CD8-positive, alpha-beta T cell (primary cell): ENCODE measurements at regions of chr16 and their contacts with region 1.

Region 1: GRCh38 chr16:28924732-28925385 is at the start of gene RABEP2:
- DNase-seq: peak; percentile 92 to 99 (median 94)
- ATAC-seq: peak; percentile 77
- H3K4me3 ChIP-seq: peak within 1 kb of the TSS; percentile 96 to 97
- H3K4me3 Mint-ChIP-seq: peak within 1 kb of the TSS; percentile 94
- H3K27ac ChIP-seq: peak within 1 kb of the TSS; percentile 98
- H3K27ac Mint-ChIP-seq: peak within 1 kb of the TSS; percentile 97
- H3K4me1 ChIP-seq: peaks cover 10% of the 10 kb centered on the region
- H3K4me1 Mint-ChIP-seq: peaks cover 25% of the 10 kb centered on the region
- H3K27me3 ChIP-seq: no peaks in the 10 kb centered on the region
- H3K27me3 Mint-ChIP-seq: no peaks in the 10 kb centered on the region
- CTCF ChIP-seq: no peak
- total RNA-seq, gene RABEP2: 26.5 to 29.0 TPM

Region 2: GRCh38 chr16:28823872-28824716 is 100.8 kb before region 1 on chr16:
- CTCF ChIA-PET with region 1: no interaction called
- POLR2A ChIA-PET with region 1: interaction called, 3 read pairs
- intact Hi-C with region 1: loop called in 1 of 2 experiments (anchors 1 kb)
- DNase-seq: peak; percentile 88 to 97 (median 95)
- ATAC-seq: peak; percentile 67
- H3K4me3 ChIP-seq: peak overlapping the region; percentile 74 to 94
- H3K4me3 Mint-ChIP-seq: peak overlapping the region; percentile 97
- H3K27ac ChIP-seq: peak overlapping the region; percentile 93 to 94
- H3K27ac Mint-ChIP-seq: peak overlapping the region; percentile 99
- H3K4me1 ChIP-seq: peaks cover 30% of the 10 kb centered on the region
- H3K4me1 Mint-ChIP-seq: peaks cover 43% of the 10 kb centered on the region
- H3K27me3 ChIP-seq: no peaks in the 10 kb centered on the region
- H3K27me3 Mint-ChIP-seq: no peaks in the 10 kb centered on the region
- CTCF ChIP-seq: peak; percentile 21

Region 3: GRCh38 chr16:28863929-28864793 is 60.7 kb before region 1 on chr16:
- CTCF ChIA-PET with region 1: no interaction called
- POLR2A ChIA-PET with region 1: interaction called, 18 read pairs
- intact Hi-C with region 1: loop called (anchors 1 kb)
- DNase-seq: peak in 4 of 9 experiments; percentile 20 to 70 (median 60)
- ATAC-seq: no peak
- H3K4me3 ChIP-seq: peak overlapping the region; percentile 97 to 100
- H3K4me3 Mint-ChIP-seq: peak overlapping the region; percentile 99
- H3K27ac ChIP-seq: peak overlapping the region; percentile 84 to 97
- H3K27ac Mint-ChIP-seq: peak overlapping the region; percentile 99
- H3K4me1 ChIP-seq: peaks cover 16% of the 10 kb centered on the region
- H3K4me1 Mint-ChIP-seq: peaks cover 33% of the 10 kb centered on the region
- H3K27me3 ChIP-seq: no peaks in the 10 kb centered on the region
- H3K27me3 Mint-ChIP-seq: no peaks in the 10 kb centered on the region
- CTCF ChIP-seq: no peak

Region 4: DNA sequence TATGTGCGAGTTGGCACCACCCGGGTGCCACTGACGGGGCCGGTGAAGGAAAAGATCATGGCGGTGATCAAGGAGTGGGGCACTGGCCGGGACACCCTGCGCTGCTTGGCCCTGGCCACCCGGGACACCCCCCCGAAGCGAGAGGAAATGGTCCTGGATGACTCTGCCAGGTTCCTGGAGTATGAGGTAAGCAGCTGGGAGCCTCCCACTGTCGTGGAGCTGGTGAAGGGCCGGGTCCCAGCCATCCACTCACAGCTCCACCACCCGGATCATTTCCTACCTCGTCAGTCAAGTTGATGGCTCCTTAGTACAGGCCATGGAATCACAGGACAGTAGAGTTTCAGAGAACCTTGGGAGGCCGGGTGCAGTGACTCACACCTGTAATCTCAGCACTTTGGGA is 26.6 kb before region 1 on chr16:
- CTCF ChIA-PET with region 1: no interaction called
- POLR2A ChIA-PET with region 1: no interaction called
- intact Hi-C with region 1: no loop called
- DNase-seq: no peak
- ATAC-seq: no peak
- H3K4me3 ChIP-seq: no peak overlapping the region
- H3K4me3 Mint-ChIP-seq: no peak overlapping the region
- H3K27ac ChIP-seq: no peak overlapping the region
- H3K27ac Mint-ChIP-seq: no peak overlapping the region
- H3K4me1 ChIP-seq: no peaks in the 10 kb centered on the region
- H3K4me1 Mint-ChIP-seq: peaks cover 4% of the 10 kb centered on the region
- H3K27me3 ChIP-seq: no peaks in the 10 kb centered on the region
- H3K27me3 Mint-ChIP-seq: no peaks in the 10 kb centered on the region
- CTCF ChIP-seq: no peak

Region 5: GRCh38 chr16:28935924-28936783 is 11.3 kb after region 1 on chr16:
- CTCF ChIA-PET with region 1: no interaction called
- POLR2A ChIA-PET with region 1: interaction called, 9 read pairs
- intact Hi-C with region 1: loop called (anchors 1 kb)
- DNase-seq: peak; percentile 61 to 89 (median 80)
- ATAC-seq: peak; percentile 100
- H3K4me3 ChIP-seq: peak overlapping the region; percentile 25 to 41
- H3K4me3 Mint-ChIP-seq: peak overlapping the region; percentile 76
- H3K27ac ChIP-seq: no peak overlapping the region
- H3K27ac Mint-ChIP-seq: no peak overlapping the region
- H3K4me1 ChIP-seq: peaks cover 19% of the 10 kb centered on the region
- H3K4me1 Mint-ChIP-seq: peaks cover 15% of the 10 kb centered on the region
- H3K27me3 ChIP-seq: no peaks in the 10 kb centered on the region
- H3K27me3 Mint-ChIP-seq: no peaks in the 10 kb centered on the region
- CTCF ChIP-seq: no peak

Region 6: GRCh38 chr16:28974437-28975157 is 49.7 kb after region 1 on chr16 and contains the start of gene SPNS1:
- CTCF ChIA-PET with region 1: no interaction called
- POLR2A ChIA-PET with region 1: interaction called, 3 read pairs
- intact Hi-C with region 1: loop called (anchors 1 to 2 kb)
- DNase-seq: peak; percentile 78 to 95 (median 90)
- ATAC-seq: peak; percentile 87
- H3K4me3 ChIP-seq: peak within 1 kb of the TSS; percentile 68 to 96
- H3K4me3 Mint-ChIP-seq: peak within 1 kb of the TSS; percentile 98
- H3K27ac ChIP-seq: peak within 1 kb of the TSS; percentile 55 to 79
- H3K27ac Mint-ChIP-seq: peak within 1 kb of the TSS; percentile 97
- H3K4me1 ChIP-seq: peaks cover 19% of the 10 kb centered on the region
- H3K4me1 Mint-ChIP-seq: peaks cover 41% of the 10 kb centered on the region
- H3K27me3 ChIP-seq: no peaks in the 10 kb centered on the region
- H3K27me3 Mint-ChIP-seq: no peaks in the 10 kb centered on the region
- CTCF ChIP-seq: no peak
- total RNA-seq, gene SPNS1: 31.7 to 31.8 TPM